HEK293 (cell line): ENCODE measurements at regions of chr4 and their contacts with region 1.

Region 1: GRCh38 chr4:140373328-140374129 is at the start of gene SCOC:
- H3K4me3 ChIP-seq: peak within 1 kb of the TSS; percentile 87
- H3K27ac ChIP-seq: peak within 1 kb of the TSS; percentile 69; the same call in 1 of the 2 replicates
- H3K4me1 ChIP-seq: 0 out of 2 replicates have a peak, but pooled peaks cover 3% of the 10 kb centered on the region
- CTCF ChIP-seq: no peak

Region 2: GRCh38 chr4:140266991-140267426 is 106.5 kb before region 1 on chr4:
- CTCF ChIA-PET with region 1: no interaction called
- POLR2A ChIA-PET with region 1: no interaction called
- H3K4me3 ChIP-seq: no peak overlapping the region
- H3K27ac ChIP-seq: no peak overlapping the region
- H3K4me1 ChIP-seq: no peaks in the 10 kb centered on the region
- CTCF ChIP-seq: no peak

Region 3: DNA sequence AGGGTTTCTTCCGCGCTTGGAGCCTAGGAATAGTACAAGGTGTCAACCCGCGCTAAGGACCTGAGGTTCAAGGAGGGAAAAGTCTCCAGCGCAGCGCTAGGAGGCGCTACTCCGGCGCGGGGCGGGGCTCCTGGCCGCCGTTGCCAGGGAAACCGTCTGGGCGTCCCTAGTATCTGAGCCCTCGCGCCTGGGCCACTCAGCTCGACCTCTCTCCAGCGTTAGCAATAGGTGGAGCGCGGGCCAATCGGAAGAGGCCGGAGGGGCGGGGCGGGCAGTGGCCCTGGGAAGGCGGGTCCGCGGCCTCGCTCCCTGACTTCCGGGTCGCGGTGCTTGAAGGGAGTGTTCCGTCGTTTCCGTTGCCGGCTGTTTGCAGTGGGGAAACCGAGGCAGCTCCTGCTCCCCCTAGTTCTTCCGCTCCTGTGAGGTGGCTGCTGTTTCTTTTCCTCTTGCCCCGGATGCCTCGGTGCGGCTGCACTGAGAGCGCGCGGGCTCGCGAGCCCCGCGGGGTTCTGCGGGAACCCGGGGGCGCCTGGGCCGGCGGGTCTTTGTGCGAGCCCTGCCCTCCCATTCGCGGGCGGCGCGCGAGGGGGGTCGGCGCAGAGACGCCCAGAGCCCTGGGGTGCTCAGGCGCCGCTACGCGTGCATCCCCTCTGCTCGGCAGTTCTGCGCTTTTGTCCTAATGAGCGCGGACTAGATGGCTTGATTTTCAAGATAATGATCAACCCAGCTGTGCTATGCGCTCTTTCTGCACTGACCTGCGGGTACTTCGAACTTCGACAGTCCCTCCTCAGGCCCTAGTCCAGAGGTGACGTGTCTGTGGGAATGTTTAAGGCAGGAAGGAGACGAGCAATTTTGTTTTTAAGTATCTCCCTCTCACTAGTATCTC is 150.6 kb after region 1 on chr4 and contains the start of gene ELMOD2:
- CTCF ChIA-PET with region 1: interaction called, 5 read pairs
- POLR2A ChIA-PET with region 1: interaction called, 11 read pairs
- H3K4me3 ChIP-seq: peak within 1 kb of the TSS; percentile 89
- H3K27ac ChIP-seq: peak within 1 kb of the TSS; percentile 28; the same call in 1 of the 2 replicates
- H3K4me1 ChIP-seq: no peaks in the 10 kb centered on the region
- CTCF ChIP-seq: peak; percentile 80

Region 4: DNA sequence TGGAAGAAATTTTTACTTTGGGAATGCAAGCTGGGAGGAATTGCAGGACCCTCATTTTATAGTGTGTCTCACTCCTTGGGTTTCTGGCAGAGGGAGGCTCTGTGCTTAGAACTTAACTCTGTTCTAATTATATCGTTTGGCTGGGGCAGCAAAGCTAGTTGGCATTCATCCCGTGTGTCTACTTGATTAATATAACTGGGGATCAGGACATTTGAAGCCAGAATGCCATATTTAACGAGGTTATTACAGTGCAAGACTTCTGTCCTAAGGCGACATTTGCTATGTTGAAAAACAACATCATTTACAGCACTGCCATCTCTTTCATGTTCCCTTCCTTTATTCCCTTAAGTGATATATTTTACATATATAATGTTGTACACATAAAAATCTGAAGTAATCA is 561.7 kb after region 1 on chr4:
- CTCF ChIA-PET with region 1: no interaction called
- POLR2A ChIA-PET with region 1: no interaction called
- H3K4me3 ChIP-seq: no peak overlapping the region
- H3K27ac ChIP-seq: no peak overlapping the region
- H3K4me1 ChIP-seq: peaks cover 5% of the 10 kb centered on the region; the same call in 1 of the 2 replicates
- CTCF ChIP-seq: no peak